ENCODE measurements at regions of chr14 and their contacts with region 1.

Region 1: DNA sequence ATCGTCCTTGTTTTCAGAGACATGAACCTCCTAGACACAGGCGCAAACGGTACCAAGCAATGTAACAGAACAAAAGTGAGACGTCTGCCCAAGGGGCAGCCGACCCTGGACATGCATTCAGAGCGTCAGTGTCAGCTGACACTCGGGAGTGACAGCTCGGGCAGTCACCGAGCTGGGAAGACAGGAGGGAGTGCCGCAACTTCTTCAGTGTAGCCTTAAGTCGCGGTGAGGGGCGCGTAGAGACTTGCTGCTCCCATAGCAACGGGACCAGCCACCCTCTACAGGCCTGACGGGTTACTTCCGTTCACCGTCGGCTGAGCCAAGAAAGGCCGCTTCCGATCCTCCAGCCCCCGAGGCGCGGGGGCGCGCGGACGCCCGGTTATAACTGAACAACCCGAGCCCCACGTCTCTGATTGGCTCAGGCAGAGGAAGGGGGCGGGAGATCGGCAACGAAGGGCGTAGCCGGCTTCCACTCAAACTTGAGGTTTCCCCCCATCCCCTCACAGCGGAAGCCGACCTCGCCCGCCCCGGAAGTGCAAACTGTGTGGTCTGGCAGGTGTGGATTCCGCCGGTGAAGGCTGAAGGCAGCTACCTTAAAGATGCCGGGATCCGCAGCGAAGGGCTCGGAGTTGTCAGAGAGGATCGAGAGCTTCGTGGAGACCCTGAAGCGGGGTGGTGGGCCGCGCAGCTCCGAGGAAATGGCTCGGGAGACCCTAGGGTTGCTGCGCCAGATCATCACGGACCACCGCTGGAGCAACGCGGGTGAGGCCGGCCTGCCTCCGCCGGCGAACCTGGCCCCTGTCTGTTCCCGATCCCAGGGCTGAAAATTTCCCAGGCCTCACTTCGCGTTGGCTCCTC is at the start of gene EIF2B2:
- DNase-seq: peak; percentile 99
- H3K4me3 Mint-ChIP-seq: peak within 1 kb of the TSS; percentile 98
- H3K27ac Mint-ChIP-seq: peak within 1 kb of the TSS; percentile 92
- H3K4me1 Mint-ChIP-seq: peaks cover 54% of the 10 kb centered on the region
- H3K27me3 Mint-ChIP-seq: peaks cover 10% of the 10 kb centered on the region
- total RNA-seq, gene EIF2B2: 52.8 and 54.3 TPM in 2 replicates

Region 2: GRCh38 chr14:74841230-74842207 is 161.1 kb before region 1 on chr14:
- intact Hi-C with region 1: loop called (anchors 5 kb)
- DNase-seq: peak; percentile 30
- H3K4me3 Mint-ChIP-seq: peak overlapping the region; percentile 72
- H3K27ac Mint-ChIP-seq: peak overlapping the region; percentile 92
- H3K4me1 Mint-ChIP-seq: peaks cover 60% of the 10 kb centered on the region
- H3K27me3 Mint-ChIP-seq: no peaks in the 10 kb centered on the region

Region 3: GRCh38 chr14:74945823-74946682 is 56.6 kb before region 1 on chr14:
- intact Hi-C with region 1: loop called (anchors 2 kb)
- DNase-seq: peak; percentile 60
- H3K4me3 Mint-ChIP-seq: no peak overlapping the region
- H3K27ac Mint-ChIP-seq: no peak overlapping the region
- H3K4me1 Mint-ChIP-seq: peaks cover 32% of the 10 kb centered on the region
- H3K27me3 Mint-ChIP-seq: peaks cover 2% of the 10 kb centered on the region

Region 4: DNA sequence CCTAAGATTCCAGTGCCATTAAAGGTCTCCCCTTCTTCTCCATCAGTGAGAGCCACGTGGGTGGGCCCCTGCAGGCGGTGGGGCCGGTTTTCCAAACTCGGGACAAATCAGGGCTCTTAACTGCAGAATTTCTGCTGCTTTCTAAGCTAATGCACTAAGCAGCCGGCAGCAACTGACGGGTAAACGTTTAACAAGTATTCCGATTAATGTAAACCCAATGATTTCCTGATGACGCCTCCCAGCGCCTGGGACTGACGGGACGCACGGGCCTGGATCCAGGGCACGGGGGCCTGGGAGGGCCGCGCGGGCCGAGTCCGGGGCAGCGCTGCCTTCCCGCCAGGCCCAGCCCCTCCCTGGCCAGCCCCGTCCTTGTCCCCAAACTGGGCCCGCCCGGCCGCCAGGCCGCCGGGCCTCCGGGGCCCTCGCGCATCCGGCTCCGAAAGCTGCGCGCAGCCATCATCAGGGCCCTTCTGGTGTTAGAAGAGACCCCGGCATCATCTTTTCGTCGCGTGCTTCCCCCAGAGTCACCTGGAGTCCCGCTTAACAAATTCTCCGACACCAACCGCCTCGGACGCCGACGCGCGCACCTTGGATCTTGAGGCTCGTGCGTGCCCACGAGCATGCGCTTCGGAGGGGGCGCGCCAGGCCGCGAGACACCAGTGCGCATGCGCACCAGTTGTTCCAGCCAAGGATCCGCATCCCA is 48.4 kb after region 1 on chr14 and contains the start of gene MLH3:
- intact Hi-C with region 1: loop called (anchors 1 kb)
- DNase-seq: peak; percentile 75
- H3K4me3 Mint-ChIP-seq: peak within 1 kb of the TSS; percentile 90
- H3K27ac Mint-ChIP-seq: peak within 1 kb of the TSS; percentile 92
- H3K4me1 Mint-ChIP-seq: peaks cover 60% of the 10 kb centered on the region
- H3K27me3 Mint-ChIP-seq: no peaks in the 10 kb centered on the region
- total RNA-seq, gene MLH3: 24.3 and 28.3 TPM in 2 replicates

Region 5: GRCh38 chr14:75063407-75064213 is 61.0 kb after region 1 on chr14 and contains the start of gene ACYP1:
- intact Hi-C with region 1: loop called (anchors 1 kb)
- DNase-seq: peak; percentile 89
- H3K4me3 Mint-ChIP-seq: peak within 1 kb of the TSS; percentile 99
- H3K27ac Mint-ChIP-seq: peak within 1 kb of the TSS; percentile 96
- H3K4me1 Mint-ChIP-seq: peaks cover 31% of the 10 kb centered on the region
- H3K27me3 Mint-ChIP-seq: no peaks in the 10 kb centered on the region
- total RNA-seq, gene ACYP1: 37.9 and 43.0 TPM in 2 replicates

Region 6: GRCh38 chr14:75069045-75069810 is 66.6 kb after region 1 on chr14 and contains the start of gene ZC2HC1C:
- intact Hi-C with region 1: loop called (anchors 1 kb)
- DNase-seq: peak; percentile 65
- H3K4me3 Mint-ChIP-seq: no peak within 1 kb of the TSS
- H3K27ac Mint-ChIP-seq: peak within 1 kb of the TSS; percentile 66
- H3K4me1 Mint-ChIP-seq: peaks cover 5% of the 10 kb centered on the region
- H3K27me3 Mint-ChIP-seq: no peaks in the 10 kb centered on the region
- total RNA-seq, gene ZC2HC1C: 0.71 and 0.80 TPM in 2 replicates

Measured in activated T-helper 1 cell treated with anti-CD3 and anti-CD28 coated beads, Interleukin-12 subunit alpha, Interleukin-12 subunit beta, Interleukin-2, Interleukin-4 antibody, amounts not matched to agents 30 ng/mL and 10 ng/mL and 1 ng/mL, durations not matched to agents 14 hours and 24 hours and 36 hours (primary cell).